A549 (cell line): ENCODE measurements at regions of chr6 and their contacts with region 1.

Region 1: DNA sequence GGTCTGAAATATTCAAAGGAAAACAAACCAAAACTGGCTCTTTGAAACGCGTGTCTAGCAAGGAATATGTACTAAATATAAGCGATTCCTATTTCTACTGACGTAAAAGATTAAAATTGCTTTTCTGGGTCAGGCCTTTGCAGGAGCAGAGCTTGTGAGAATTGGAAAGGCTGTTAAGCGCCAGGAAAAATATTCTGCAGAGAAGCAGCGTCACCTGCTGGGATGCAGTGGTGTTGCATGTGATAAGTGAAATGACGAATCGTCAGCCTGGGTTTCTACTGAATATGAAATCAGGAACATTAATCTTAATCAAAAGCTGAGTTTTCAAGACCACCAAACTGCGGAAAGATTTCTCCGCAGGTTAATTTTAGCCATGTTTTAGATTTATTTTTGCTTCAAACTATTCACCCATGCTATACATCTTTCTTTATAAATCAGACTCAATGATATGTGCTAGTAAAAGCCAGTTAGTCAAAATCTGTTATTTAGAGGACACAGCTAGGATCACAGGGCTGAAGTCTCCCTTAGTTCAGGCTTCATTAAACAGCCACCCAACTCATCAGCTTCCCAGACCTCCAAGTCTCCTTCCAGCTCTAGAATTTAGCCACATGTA is 67.4 kb downstream of the ALDH8A1 start:
- DNase-seq: peak; percentile 22 to 67
- ATAC-seq: peak; percentile 50 to 74; a peak in 4 of 6 replicates
- H3K4me3 ChIP-seq: no peak overlapping the region
- H3K27ac ChIP-seq: peak overlapping the region; percentile 55 to 67; a peak in 5 of 6 replicates
- H3K4me1 ChIP-seq: no peaks in the 10 kb centered on the region
- CTCF ChIP-seq: peak; percentile 86
- EP300 ChIP-seq: no peak
- POLR2A ChIP-seq: no peak
- RAD21 ChIP-seq: peak; percentile 93 to 96

Region 2: GRCh38 chr6:134152767-134153485 is 729.6 kb before region 1 on chr6:
- CTCF ChIA-PET with region 1: interaction called, 31 read pairs
- POLR2A ChIA-PET with region 1: no interaction called
- DNase-seq: no peak
- ATAC-seq: no peak
- H3K4me3 ChIP-seq: no peak overlapping the region
- H3K27ac ChIP-seq: no peak overlapping the region
- H3K4me1 ChIP-seq: no peaks in the 10 kb centered on the region
- CTCF ChIP-seq: no peak
- EP300 ChIP-seq: no peak
- POLR2A ChIP-seq: no peak
- RAD21 ChIP-seq: no peak

Region 3: GRCh38 chr6:134822920-134823709 is 59.4 kb before region 1 on chr6:
- CTCF ChIA-PET with region 1: interaction called, 24 read pairs
- POLR2A ChIA-PET with region 1: no interaction called
- DNase-seq: peak; percentile 66 to 82
- ATAC-seq: peak; percentile 100
- H3K4me3 ChIP-seq: no peak overlapping the region
- H3K27ac ChIP-seq: peak overlapping the region; percentile 61 to 86
- H3K4me1 ChIP-seq: peaks cover 6% of the 10 kb centered on the region; the same call in 2 of the 3 replicates
- CTCF ChIP-seq: peak; percentile 89
- EP300 ChIP-seq: no peak
- POLR2A ChIP-seq: no peak
- RAD21 ChIP-seq: peak; percentile 97

Region 4: DNA sequence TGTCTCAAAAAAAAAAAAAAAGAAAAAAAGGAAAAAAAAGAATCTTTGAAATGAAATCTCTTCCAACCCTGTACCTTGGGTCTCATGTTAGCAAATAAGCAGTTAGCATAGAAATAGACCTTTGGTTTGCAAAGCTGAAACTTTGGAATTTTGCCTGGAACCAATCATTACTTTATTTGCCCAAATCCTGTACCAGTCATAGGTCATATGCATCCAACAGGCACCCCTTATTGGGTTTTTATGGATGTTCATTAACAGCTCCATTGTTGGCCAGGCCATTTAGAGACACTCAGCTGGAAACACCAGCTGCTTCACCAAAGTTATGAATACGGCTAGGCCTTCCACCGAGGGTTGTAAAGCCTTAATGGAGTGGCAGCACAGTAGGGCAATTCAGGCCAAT is 14.4 kb after region 1 on chr6:
- CTCF ChIA-PET with region 1: interaction called, 10 read pairs
- POLR2A ChIA-PET with region 1: no interaction called
- DNase-seq: no peak
- ATAC-seq: no peak
- H3K4me3 ChIP-seq: no peak overlapping the region
- H3K27ac ChIP-seq: no peak overlapping the region
- H3K4me1 ChIP-seq: no peaks in the 10 kb centered on the region
- CTCF ChIP-seq: no peak
- EP300 ChIP-seq: no peak
- POLR2A ChIP-seq: no peak
- RAD21 ChIP-seq: no peak

Region 5: DNA sequence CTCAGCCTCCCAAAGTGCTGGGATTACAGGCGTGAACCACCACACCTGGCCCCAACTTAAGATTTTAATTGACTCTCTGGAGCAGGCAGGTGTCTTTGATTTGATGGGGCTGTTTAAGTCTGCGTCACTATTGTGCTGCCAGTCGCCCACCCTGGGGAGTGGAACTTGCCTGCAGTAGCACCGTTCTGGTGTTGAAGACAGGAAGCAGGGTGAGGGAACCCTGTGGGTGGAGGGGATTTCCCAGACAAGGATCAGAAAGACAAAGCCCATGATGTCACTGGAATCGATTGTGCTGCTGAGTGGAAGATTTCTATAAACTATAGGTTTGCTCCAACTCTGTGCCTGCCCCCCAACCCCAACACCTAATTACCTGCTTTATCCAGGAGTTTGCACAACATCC is 56.4 kb after region 1 on chr6:
- CTCF ChIA-PET with region 1: interaction called, 26 read pairs
- POLR2A ChIA-PET with region 1: no interaction called
- DNase-seq: no peak
- ATAC-seq: no peak
- H3K4me3 ChIP-seq: no peak overlapping the region
- H3K27ac ChIP-seq: peak overlapping the region in 1 of 2 experiments; percentile 49; a peak in 1 of 6 replicates
- H3K4me1 ChIP-seq: peaks cover 36% of the 10 kb centered on the region
- CTCF ChIP-seq: no peak
- EP300 ChIP-seq: no peak
- POLR2A ChIP-seq: no peak
- RAD21 ChIP-seq: no peak

Region 6: DNA sequence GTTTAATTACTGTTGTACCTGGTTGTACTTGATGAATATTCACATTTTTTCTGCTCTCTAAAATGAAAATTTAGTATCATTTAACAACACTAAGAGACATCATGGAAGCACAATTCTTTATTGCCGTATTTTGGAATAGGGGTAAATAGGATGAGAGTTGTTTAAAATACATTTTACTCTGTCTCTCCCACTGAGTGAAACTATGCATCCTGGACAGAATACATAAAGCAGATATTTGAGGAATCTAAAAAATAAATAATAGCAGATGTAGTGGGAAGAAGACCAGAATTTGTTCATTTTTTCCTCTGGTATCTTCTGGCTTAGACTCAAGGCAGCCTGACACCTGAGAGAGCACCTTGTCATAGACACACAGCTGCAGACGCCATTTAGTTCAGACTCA is 734.1 kb after region 1 on chr6:
- CTCF ChIA-PET with region 1: no interaction called
- POLR2A ChIA-PET with region 1: no interaction called
- DNase-seq: no peak
- ATAC-seq: no peak
- H3K4me3 ChIP-seq: no peak overlapping the region
- H3K27ac ChIP-seq: no peak overlapping the region
- H3K4me1 ChIP-seq: no peaks in the 10 kb centered on the region
- CTCF ChIP-seq: no peak
- EP300 ChIP-seq: no peak
- POLR2A ChIP-seq: no peak
- RAD21 ChIP-seq: no peak